ENCODE measurements at regions of chr20 and their contacts with region 1.

Region 1: GRCh38 chr20:62245911-62246280 is 7.6 kb downstream of the OSBPL2 start:
- DNase-seq: no peak
- ATAC-seq: no peak
- H3K4me3 ChIP-seq: no peak overlapping the region
- H3K27ac ChIP-seq: no peak overlapping the region
- H3K4me1 ChIP-seq: no peaks in the 10 kb centered on the region
- H3K27me3 ChIP-seq: no peaks in the 10 kb centered on the region
- CTCF ChIP-seq: no peak

Region 2: GRCh38 chr20:62165762-62166399 is 80.0 kb before region 1 on chr20:
- CTCF ChIA-PET with region 1: interaction called, 10 read pairs
- POLR2A ChIA-PET with region 1: no interaction called
- in situ Hi-C with region 1: no loop called
- intact Hi-C with region 1: no loop called
- DNase-seq: no peak
- ATAC-seq: no peak
- H3K4me3 ChIP-seq: no peak overlapping the region
- H3K27ac ChIP-seq: no peak overlapping the region
- H3K4me1 ChIP-seq: no peaks in the 10 kb centered on the region
- H3K27me3 ChIP-seq: no peaks in the 10 kb centered on the region
- CTCF ChIP-seq: no peak

Region 3: GRCh38 chr20:62178316-62179161 is 67.4 kb before region 1 on chr20:
- CTCF ChIA-PET with region 1: no interaction called
- POLR2A ChIA-PET with region 1: no interaction called
- in situ Hi-C with region 1: no loop called
- intact Hi-C with region 1: no loop called
- DNase-seq: no peak
- ATAC-seq: no peak
- H3K4me3 ChIP-seq: no peak overlapping the region
- H3K27ac ChIP-seq: no peak overlapping the region
- H3K4me1 ChIP-seq: peaks cover 7% of the 10 kb centered on the region; the same call in 1 of the 2 replicates
- H3K27me3 ChIP-seq: no peaks in the 10 kb centered on the region
- CTCF ChIP-seq: no peak

Region 4: DNA sequence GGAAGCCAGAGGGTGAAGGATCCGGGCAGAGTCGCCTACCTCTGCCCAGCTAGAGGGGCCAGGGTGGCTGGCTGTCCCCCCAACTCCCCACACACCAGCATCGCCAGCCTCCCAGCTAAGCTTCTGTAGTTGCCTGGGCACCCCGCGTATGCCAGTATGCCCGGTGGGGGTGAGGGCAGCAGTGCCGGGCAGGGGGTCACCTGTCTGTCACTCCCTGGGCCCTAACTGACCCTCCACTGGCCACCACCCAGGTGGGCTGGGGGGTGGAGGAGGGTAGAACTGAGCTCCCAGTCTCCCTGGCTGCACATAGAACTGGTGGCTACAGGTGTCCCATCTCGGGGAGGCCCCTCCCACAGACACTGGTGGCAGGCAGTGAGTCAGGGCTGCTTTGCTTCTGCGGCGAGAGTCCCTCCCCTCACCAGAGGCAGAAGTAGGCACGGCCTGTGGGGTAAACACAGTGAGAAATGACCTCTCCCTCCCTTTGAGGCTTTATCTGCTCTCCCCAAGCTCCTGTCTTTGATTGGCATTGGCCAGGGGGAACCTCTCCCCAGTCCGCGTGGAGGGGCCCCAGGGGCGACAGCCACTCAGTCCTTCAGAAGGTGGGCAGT is 465.1 kb after region 1 on chr20:
- CTCF ChIA-PET with region 1: no interaction called
- POLR2A ChIA-PET with region 1: no interaction called
- in situ Hi-C with region 1: no loop called
- intact Hi-C with region 1: no loop called
- DNase-seq: no peak
- ATAC-seq: peak; percentile 64
- H3K4me3 ChIP-seq: peak overlapping the region; percentile 55 to 86
- H3K27ac ChIP-seq: peak overlapping the region; percentile 82
- H3K4me1 ChIP-seq: peaks cover 66% of the 10 kb centered on the region
- H3K27me3 ChIP-seq: no peaks in the 10 kb centered on the region
- CTCF ChIP-seq: no peak